ENCODE measurements at regions of chr7 and their contacts with region 1.

Region 1: GRCh38 chr7:136009488-136010079 is 32.4 kb upstream of the MTPN start:
- DNase-seq: peak; percentile 52 to 79 (median 57)
- ATAC-seq: peak; percentile 81
- H3K4me3 ChIP-seq: no peak overlapping the region
- H3K27ac ChIP-seq: no peak overlapping the region
- H3K4me1 ChIP-seq: no peaks in the 10 kb centered on the region
- H3K27me3 ChIP-seq: no peaks in the 10 kb centered on the region
- CTCF ChIP-seq: peak; percentile 54 to 95 (median 71); a peak in 4 of 6 replicates
- EP300 ChIP-seq: peak; percentile 44; the same call in 1 of the 2 replicates
- POLR2A ChIP-seq: no peak
- RAD21 ChIP-seq: peak; percentile 99 to 100

Region 2: DNA sequence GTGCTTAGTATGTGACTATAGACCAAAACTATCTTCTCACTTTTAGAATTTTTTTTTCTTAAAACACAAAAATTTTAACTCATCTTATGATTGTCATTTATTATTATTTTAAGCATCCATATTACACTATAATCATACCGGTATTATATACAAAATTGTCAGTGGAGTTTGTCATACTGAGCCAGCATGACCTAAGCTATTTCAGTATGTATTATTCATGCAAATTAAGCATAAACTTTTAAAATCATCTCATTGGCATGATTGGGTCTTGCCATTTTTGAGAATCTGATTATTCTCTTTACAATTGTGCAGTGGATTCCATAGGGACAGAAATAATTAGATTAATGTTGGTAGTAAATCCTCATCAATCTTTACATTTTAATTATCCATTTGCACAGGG is 393.4 kb before region 1 on chr7:
- CTCF ChIA-PET with region 1: interaction called, 5 read pairs
- POLR2A ChIA-PET with region 1: no interaction called
- in situ Hi-C with region 1: no loop called
- intact Hi-C with region 1: loop called (anchors 5 kb)
- DNase-seq: no peak
- ATAC-seq: no peak
- H3K4me3 ChIP-seq: no peak overlapping the region
- H3K27ac ChIP-seq: no peak overlapping the region
- H3K4me1 ChIP-seq: no peaks in the 10 kb centered on the region
- H3K27me3 ChIP-seq: no peaks in the 10 kb centered on the region
- CTCF ChIP-seq: no peak
- EP300 ChIP-seq: no peak
- POLR2A ChIP-seq: no peak
- RAD21 ChIP-seq: no peak

Region 3: DNA sequence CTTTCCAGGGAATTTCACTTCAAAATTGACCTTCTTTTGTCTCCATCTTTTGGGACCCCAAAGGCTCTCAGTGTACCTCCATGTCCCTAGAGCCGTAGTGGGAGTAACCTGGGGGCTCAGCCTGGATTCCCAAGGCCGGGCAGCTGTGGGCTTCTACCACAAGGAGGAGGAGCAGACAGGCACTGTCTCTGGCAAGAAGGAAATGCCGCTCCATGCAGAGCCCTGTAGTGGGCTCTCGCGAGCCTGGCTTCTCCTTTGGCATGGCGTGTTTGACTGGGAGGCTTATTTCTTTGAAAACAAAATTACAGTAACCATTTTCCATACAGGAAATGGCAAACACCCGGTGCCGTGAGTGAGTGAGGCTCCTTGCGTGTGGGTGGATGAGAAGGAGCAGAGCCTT is 184.2 kb before region 1 on chr7:
- CTCF ChIA-PET with region 1: interaction called, 19 read pairs
- POLR2A ChIA-PET with region 1: no interaction called
- in situ Hi-C with region 1: no loop called
- intact Hi-C with region 1: loop called (anchors 1 kb)
- DNase-seq: peak in 2 of 4 experiments; percentile 55 to 61
- ATAC-seq: peak; percentile 93
- H3K4me3 ChIP-seq: no peak overlapping the region
- H3K27ac ChIP-seq: no peak overlapping the region
- H3K4me1 ChIP-seq: peaks cover 0 to 4% of the 10 kb centered on the region in 2 experiments; a peak in 1 of 5 replicates
- H3K27me3 ChIP-seq: peaks cover 49 to 84% of the 10 kb centered on the region in 2 experiments; a peak in 4 of 5 replicates
- CTCF ChIP-seq: peak; percentile 77 to 98 (median 97)
- EP300 ChIP-seq: no peak
- POLR2A ChIP-seq: no peak
- RAD21 ChIP-seq: peak; percentile 84 to 85

Region 4: GRCh38 chr7:136874238-136875032 is 864.9 kb after region 1 on chr7:
- CTCF ChIA-PET with region 1: no interaction called
- POLR2A ChIA-PET with region 1: no interaction called
- in situ Hi-C with region 1: no loop called
- intact Hi-C with region 1: loop called (anchors 10 kb)
- DNase-seq: peak; percentile 57 to 71 (median 63)
- ATAC-seq: peak; percentile 88
- H3K4me3 ChIP-seq: no peak overlapping the region
- H3K27ac ChIP-seq: no peak overlapping the region
- H3K4me1 ChIP-seq: peaks cover 0 to 9% of the 10 kb centered on the region in 2 experiments; a peak in 1 of 5 replicates
- H3K27me3 ChIP-seq: peaks cover 10 to 20% of the 10 kb centered on the region in 2 experiments; a peak in 3 of 5 replicates
- CTCF ChIP-seq: peak; percentile 36 to 60 (median 53); a peak in 4 of 6 replicates
- EP300 ChIP-seq: no peak
- POLR2A ChIP-seq: no peak
- RAD21 ChIP-seq: peak in 1 of 2 experiments; percentile 44; a peak in 2 of 4 replicates

Region 5: GRCh38 chr7:137592232-137592896 is 1582.8 kb after region 1 on chr7:
- CTCF ChIA-PET with region 1: no interaction called
- POLR2A ChIA-PET with region 1: no interaction called
- in situ Hi-C with region 1: no loop called
- intact Hi-C with region 1: loop called (anchors 10 kb)
- DNase-seq: peak; percentile 48 to 76 (median 64)
- ATAC-seq: peak; percentile 94
- H3K4me3 ChIP-seq: no peak overlapping the region
- H3K27ac ChIP-seq: no peak overlapping the region
- H3K4me1 ChIP-seq: peaks cover 0 to 10% of the 10 kb centered on the region in 2 experiments; a peak in 3 of 5 replicates
- H3K27me3 ChIP-seq: no peaks in the 10 kb centered on the region
- CTCF ChIP-seq: peak; percentile 86 to 92 (median 92)
- EP300 ChIP-seq: no peak
- POLR2A ChIP-seq: no peak
- RAD21 ChIP-seq: peak; percentile 93